Panc1 (cell line): ENCODE measurements at regions of chr11 and their contacts with region 1.

Region 1: DNA sequence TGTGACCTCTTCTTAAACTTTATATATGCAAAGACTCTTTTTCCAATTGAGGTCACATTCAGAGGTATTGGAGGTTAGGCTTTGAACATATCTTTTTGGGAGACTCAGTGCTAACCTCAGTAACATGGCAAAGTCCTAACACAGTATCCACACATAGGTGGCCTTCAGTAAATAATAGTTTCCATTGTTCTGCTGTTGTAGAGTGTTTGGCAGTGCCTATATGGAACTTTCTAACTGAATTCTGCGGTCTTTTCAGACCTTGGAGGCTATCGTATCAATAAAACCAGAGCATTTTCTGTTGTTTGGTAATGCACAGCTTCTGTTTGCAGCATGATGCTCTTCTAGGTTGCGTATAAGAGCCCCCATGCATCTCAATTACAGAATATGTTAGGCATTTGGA is 47.0 kb downstream of the LDLRAD3 start:
- DNase-seq: no peak
- ATAC-seq: no peak
- H3K4me3 ChIP-seq: no peak overlapping the region
- H3K27ac ChIP-seq: no peak overlapping the region
- H3K4me1 ChIP-seq: no peaks in the 10 kb centered on the region
- H3K27me3 ChIP-seq: no peaks in the 10 kb centered on the region
- CTCF ChIP-seq: no peak

Region 2: DNA sequence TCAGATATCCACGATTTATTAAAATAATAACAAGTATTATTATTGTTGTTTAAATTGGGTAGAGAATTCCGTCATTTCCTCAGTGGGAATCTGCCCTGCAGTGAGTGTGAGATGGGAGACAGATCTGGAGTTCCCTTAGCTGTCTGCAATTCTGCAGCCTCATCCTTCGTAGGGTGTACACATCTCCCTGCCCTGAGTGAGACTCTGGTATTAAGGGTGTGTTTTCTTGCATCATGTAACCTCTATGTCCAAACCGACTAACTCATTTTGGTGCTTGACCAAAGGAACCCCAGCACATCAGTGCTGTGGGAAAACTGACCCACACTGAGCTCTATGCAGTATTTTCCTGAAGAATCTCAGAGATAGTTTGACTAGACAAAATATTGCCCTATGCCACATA is 110.7 kb after region 1 on chr11:
- CTCF ChIA-PET with region 1: no interaction called
- POLR2A ChIA-PET with region 1: interaction called, 13 read pairs
- in situ Hi-C with region 1: no loop called
- intact Hi-C with region 1: no loop called
- DNase-seq: no peak
- ATAC-seq: no peak
- H3K4me3 ChIP-seq: no peak overlapping the region
- H3K27ac ChIP-seq: no peak overlapping the region
- H3K4me1 ChIP-seq: no peaks in the 10 kb centered on the region
- H3K27me3 ChIP-seq: no peaks in the 10 kb centered on the region
- CTCF ChIP-seq: no peak

Region 3: DNA sequence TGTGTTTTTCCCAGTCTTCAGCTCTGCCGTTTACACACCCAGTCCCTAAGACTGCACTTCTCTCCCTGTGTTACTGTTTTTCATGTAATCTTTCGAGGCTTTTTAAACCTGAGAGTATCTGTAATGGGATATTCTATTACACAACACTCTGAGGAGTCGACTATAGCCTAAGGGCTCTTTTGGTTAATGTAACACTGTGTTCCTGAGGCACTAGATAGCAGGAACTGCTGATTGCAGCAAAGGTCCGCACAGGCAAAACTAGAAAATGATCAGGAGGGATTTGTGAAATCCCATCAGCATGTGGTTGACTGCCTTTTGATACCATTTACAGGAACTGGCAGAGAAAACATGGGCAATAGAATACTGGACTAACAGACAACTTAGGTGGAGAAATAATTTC is 1119.6 kb after region 1 on chr11:
- CTCF ChIA-PET with region 1: no interaction called
- POLR2A ChIA-PET with region 1: no interaction called
- in situ Hi-C with region 1: no loop called
- intact Hi-C with region 1: no loop called
- DNase-seq: no peak
- ATAC-seq: no peak
- H3K4me3 ChIP-seq: no peak overlapping the region
- H3K27ac ChIP-seq: no peak overlapping the region
- H3K4me1 ChIP-seq: no peaks in the 10 kb centered on the region
- H3K27me3 ChIP-seq: no peaks in the 10 kb centered on the region
- CTCF ChIP-seq: no peak